ENCODE measurements at regions of chr2 and their contacts with region 1.

Region 1: GRCh38 chr2:96208143-96209010 is at the start of gene STARD7:
- DNase-seq: peak; percentile 97
- H3K4me3 ChIP-seq: peak within 1 kb of the TSS; percentile 87 to 99 (median 96)
- H3K27ac ChIP-seq: peak within 1 kb of the TSS; percentile 70
- H3K4me1 ChIP-seq: peaks cover 28% of the 10 kb centered on the region
- H3K27me3 ChIP-seq: no peaks in the 10 kb centered on the region
- CTCF ChIP-seq: no peak
- total RNA-seq, gene STARD7: 96.7 to 241 TPM

Region 2: GRCh38 chr2:96241900-96242611 is 33.7 kb after region 1 on chr2:
- CTCF ChIA-PET with region 1: no interaction called
- dilution Hi-C with region 1: no loop called
- in situ Hi-C with region 1: no loop called
- intact Hi-C with region 1: loop called (anchors 5 kb)
- DNase-seq: peak; percentile 72
- H3K4me3 ChIP-seq: no peak overlapping the region
- H3K27ac ChIP-seq: no peak overlapping the region
- H3K4me1 ChIP-seq: peaks cover 14% of the 10 kb centered on the region
- H3K27me3 ChIP-seq: no peaks in the 10 kb centered on the region
- CTCF ChIP-seq: no peak

Region 3: GRCh38 chr2:96265840-96266679 is 57.7 kb after region 1 on chr2 and contains the starts of genes CIAO1 and TMEM127:
- CTCF ChIA-PET with region 1: interaction called, 7 read pairs
- dilution Hi-C with region 1: no loop called
- in situ Hi-C with region 1: no loop called
- intact Hi-C with region 1: loop called (anchors 1 kb)
- DNase-seq: peak; percentile 99
- H3K4me3 ChIP-seq: peak within 1 kb of the TSS; percentile 93 to 98 (median 96)
- H3K27ac ChIP-seq: peak within 1 kb of the TSS; percentile 76
- H3K4me1 ChIP-seq: peaks cover 30% of the 10 kb centered on the region
- H3K27me3 ChIP-seq: no peaks in the 10 kb centered on the region
- CTCF ChIP-seq: peak in 1 of 2 donors; percentile 28
- total RNA-seq, gene CIAO1: 64.5 to 93.9 TPM
- total RNA-seq, gene TMEM127: 39.9 to 43.8 TPM

Region 4: DNA sequence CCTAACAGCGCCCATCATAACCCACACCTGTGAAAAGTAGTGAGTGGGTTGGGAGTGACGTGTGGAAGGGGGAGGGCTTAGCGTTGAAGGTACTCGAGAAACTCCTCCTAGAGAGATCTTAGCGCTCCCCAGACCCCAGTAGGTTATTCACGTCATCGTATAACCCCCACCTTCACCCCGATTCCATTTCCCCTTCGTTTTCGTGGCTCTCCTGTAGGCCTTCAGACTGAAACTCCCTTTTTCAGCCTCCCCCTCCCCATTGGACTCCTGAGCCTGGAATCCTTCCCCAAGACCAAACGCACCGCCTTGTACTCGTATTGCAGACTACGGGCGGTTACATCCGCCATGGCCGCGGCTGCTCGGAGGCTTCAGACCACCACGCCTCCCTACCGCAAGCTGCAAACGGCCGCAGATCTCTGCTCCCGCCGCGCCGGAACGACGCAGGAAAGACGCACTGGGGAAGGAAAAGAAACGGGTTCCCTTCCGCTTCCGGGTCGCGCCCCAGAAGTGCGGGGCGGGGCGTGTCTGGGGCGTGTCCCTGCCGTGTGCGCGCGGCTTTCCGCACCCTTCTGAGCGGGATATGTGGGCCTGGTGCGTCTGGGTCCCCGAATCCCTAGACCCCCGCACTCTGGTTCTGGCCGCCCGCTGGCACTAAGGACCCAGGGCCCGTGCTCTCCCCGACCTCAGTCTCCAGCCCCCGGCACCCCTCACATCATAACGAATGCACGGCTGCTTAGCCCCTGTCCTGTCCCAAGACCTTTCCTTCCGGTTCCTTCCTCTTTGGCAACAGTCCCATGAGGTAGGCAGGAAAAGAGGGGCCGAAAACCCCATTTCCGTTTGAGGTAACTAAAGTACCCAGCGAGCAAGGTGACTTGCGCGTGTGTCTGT is 97.0 kb after region 1 on chr2 and contains the start of gene SNRNP200:
- CTCF ChIA-PET with region 1: no interaction called
- dilution Hi-C with region 1: no loop called
- in situ Hi-C with region 1: no loop called
- intact Hi-C with region 1: no loop called
- DNase-seq: peak; percentile 84
- H3K4me3 ChIP-seq: peak within 1 kb of the TSS; percentile 74 to 97 (median 84)
- H3K27ac ChIP-seq: peak within 1 kb of the TSS; percentile 79
- H3K4me1 ChIP-seq: peaks cover 15% of the 10 kb centered on the region
- H3K27me3 ChIP-seq: no peaks in the 10 kb centered on the region
- CTCF ChIP-seq: no peak
- total RNA-seq, gene SNRNP200: 45.5 to 93.8 TPM

Region 5: GRCh38 chr2:96320728-96321622 is 112.6 kb after region 1 on chr2:
- CTCF ChIA-PET with region 1: interaction called, 12 read pairs
- dilution Hi-C with region 1: no loop called
- in situ Hi-C with region 1: no loop called
- intact Hi-C with region 1: no loop called
- DNase-seq: no peak
- H3K4me3 ChIP-seq: peak overlapping the region; percentile 50 to 59 (median 55)
- H3K27ac ChIP-seq: no peak overlapping the region
- H3K4me1 ChIP-seq: peaks cover 22% of the 10 kb centered on the region
- H3K27me3 ChIP-seq: peaks cover 9% of the 10 kb centered on the region
- CTCF ChIP-seq: no peak

Measured in mammary epithelial cell (primary cell).